ENCODE measurements at regions of chr4 and their contacts with region 1.

Region 1: GRCh38 chr4:40149960-40150385 is 46.9 kb upstream of the RHOH start:
- DNase-seq: peak; percentile 68 to 84 (median 77)
- H3K4me3 ChIP-seq: no peak overlapping the region
- H3K4me3 Mint-ChIP-seq: no peak overlapping the region
- H3K27ac ChIP-seq: no peak overlapping the region
- H3K27ac Mint-ChIP-seq: peak overlapping the region in 1 of 7 donors; percentile 46
- H3K4me1 ChIP-seq: no peaks in the 10 kb centered on the region
- H3K4me1 Mint-ChIP-seq: no peaks in the 10 kb centered on the region
- H3K27me3 ChIP-seq: no peaks in the 10 kb centered on the region
- H3K27me3 Mint-ChIP-seq: no peaks in the 10 kb centered on the region
- CTCF ChIP-seq: peak; percentile 94

Region 2: DNA sequence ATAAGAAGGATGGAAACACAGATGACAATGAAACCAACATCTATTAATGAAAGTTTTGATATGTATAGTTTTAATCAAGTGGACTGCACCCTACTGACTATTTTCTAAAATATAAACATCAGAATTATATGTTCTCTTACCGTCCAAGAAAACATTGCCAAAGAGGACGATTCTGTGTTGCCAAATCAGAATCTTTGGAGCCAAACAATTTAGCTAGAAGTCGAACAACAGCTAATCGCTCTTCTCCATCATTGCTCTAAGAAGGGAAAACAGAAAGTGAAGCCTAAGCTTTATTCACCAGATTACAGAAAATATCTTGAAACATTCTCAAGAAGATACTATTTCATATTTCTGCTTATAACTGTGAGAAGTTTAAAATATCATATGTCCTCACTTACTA is 236.5 kb before region 1 on chr4:
- intact Hi-C with region 1: no loop called
- DNase-seq: no peak
- H3K4me3 ChIP-seq: no peak overlapping the region
- H3K4me3 Mint-ChIP-seq: no peak overlapping the region
- H3K27ac ChIP-seq: no peak overlapping the region
- H3K27ac Mint-ChIP-seq: no peak overlapping the region
- H3K4me1 ChIP-seq: no peaks in the 10 kb centered on the region
- H3K4me1 Mint-ChIP-seq: no peaks in the 10 kb centered on the region
- H3K27me3 ChIP-seq: no peaks in the 10 kb centered on the region
- H3K27me3 Mint-ChIP-seq: no peaks in the 10 kb centered on the region
- CTCF ChIP-seq: no peak

Region 3: DNA sequence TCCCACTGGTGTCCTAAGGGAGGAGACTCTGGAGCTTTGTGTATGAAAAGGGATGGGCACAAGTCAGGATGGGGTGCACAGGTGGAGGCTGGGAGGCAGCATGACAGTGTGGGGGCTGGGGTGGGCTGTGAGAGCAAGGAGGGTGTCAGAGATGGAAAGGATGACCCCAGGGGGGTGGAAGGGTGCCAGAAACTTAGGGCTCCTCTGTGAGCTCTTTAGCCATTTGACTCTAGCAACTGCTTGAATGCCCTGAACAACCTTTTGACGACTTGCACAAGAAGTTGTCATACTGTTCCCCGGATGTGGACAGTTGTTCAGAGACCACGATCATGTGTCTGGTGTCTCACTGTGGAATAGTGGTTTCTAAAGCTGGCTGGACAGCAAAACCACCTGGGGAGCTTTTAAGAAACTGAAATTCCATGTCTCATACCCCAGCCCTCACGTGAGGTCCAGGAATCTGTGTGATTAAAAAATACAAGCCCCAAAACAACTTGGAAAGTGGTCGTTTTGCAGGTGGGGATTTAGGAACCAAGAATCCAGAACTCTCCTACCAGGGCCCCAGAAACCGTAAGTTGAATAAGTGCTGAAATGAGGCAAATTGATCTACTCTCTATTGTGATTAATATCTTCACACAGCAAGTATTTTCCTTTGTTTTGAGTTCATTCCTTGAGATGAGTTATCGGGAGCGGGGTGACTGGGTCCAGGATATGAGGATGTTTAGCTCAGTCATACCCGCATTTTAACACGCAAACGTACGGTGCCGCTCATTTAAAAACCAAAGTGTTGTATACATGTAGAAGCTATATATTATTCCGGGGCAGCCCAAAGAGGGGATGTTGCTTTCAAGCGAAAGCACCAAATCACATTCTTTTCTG is 50.3 kb after region 1 on chr4:
- intact Hi-C with region 1: loop called in 1 of 2 experiments (anchors 10 kb)
- DNase-seq: peak; percentile 76 to 93 (median 82)
- H3K4me3 ChIP-seq: peak overlapping the region; percentile 25 to 71 (median 69)
- H3K4me3 Mint-ChIP-seq: peak overlapping the region; percentile 70 to 90
- H3K27ac ChIP-seq: peak overlapping the region; percentile 6 to 76
- H3K27ac Mint-ChIP-seq: peak overlapping the region; percentile 67 to 90 (median 84)
- H3K4me1 ChIP-seq: peaks cover 63 to 69% of the 10 kb centered on the region in 2 donors
- H3K4me1 Mint-ChIP-seq: peaks cover 70% of the 10 kb centered on the region
- H3K27me3 ChIP-seq: no peaks in the 10 kb centered on the region
- H3K27me3 Mint-ChIP-seq: peaks cover 0 to 4% (median 0%) of the 10 kb centered on the region in 3 donors
- CTCF ChIP-seq: no peak

Region 4: DNA sequence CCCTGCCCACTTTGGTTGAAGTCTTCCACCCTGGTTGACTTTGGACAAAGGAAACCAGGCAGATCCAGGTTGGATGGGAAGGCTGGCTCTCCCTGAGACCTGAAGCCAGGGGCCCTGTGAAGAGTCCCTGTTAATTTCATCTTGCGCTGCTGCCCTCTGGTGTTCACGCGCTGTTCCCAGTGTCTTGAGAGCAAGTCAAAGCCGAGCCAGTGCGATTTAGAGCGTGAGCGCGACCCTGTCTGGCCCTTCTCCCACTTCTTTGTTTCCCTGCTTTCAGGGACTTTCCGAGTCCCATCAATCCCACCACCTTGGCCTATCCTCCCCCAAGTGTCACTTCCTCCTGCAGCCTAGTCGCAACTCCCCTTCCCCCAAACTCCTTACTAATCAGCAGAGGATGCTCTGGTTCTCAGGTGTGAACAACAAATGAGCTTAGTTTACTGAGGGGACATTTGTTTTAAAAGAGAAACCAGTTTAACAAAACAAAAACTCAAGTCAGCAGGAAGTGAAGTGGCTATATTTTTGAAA is 159.3 kb after region 1 on chr4:
- intact Hi-C with region 1: loop called in 1 of 2 experiments (anchors 5 kb)
- DNase-seq: peak; percentile 74 to 85 (median 80)
- H3K4me3 ChIP-seq: no peak overlapping the region
- H3K4me3 Mint-ChIP-seq: peak overlapping the region; percentile 60 to 83
- H3K27ac ChIP-seq: peak overlapping the region in 1 of 2 donors; percentile 89
- H3K27ac Mint-ChIP-seq: peak overlapping the region; percentile 87 to 98 (median 97)
- H3K4me1 ChIP-seq: peaks cover 54 to 59% of the 10 kb centered on the region in 2 donors
- H3K4me1 Mint-ChIP-seq: peaks cover 64% of the 10 kb centered on the region
- H3K27me3 ChIP-seq: no peaks in the 10 kb centered on the region
- H3K27me3 Mint-ChIP-seq: peaks cover 7 to 16% (median 8%) of the 10 kb centered on the region in 3 donors
- CTCF ChIP-seq: peak; percentile 87

Region 5: DNA sequence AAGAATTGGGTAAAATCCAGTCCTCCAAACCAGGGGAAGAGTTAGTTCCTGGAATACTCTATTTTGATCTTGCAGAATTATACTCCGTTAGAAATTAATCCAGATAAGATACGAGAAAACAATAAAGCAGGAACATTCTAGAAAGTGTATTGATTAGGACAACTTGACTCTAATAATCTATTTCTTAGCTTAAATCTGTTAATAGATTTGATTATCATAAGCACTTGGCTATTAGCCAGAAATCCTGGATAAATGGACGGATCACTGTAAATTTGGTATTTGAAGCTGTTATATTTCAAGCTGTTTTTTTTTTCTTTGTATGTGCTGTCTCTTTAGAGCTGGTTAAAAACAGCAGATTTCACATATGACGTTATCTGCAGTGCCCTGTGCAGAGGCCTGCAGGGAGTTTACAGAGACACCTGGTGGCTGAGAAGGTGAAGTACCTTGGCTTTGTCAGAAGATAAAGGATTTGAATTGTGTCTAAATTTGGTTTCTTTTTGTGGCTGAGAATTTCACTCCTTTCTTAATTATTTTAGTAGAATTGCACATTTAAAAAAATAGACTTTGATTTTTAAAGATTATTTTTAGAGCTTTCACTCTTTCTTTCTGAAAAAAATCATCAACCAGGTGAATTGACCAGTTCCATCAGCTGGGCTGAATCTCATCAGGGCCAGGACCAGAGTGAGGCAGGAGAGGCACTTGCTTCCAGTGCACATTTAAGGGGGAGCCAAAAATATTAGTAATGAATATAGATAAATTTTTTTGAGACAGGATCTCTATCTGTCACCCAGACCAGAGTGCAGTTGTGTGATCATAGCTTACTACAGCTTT is 175.4 kb after region 1 on chr4:
- intact Hi-C with region 1: loop called (anchors 5 to 10 kb)
- DNase-seq: peak; percentile 68 to 79 (median 77)
- H3K4me3 ChIP-seq: no peak overlapping the region
- H3K4me3 Mint-ChIP-seq: no peak overlapping the region
- H3K27ac ChIP-seq: no peak overlapping the region
- H3K27ac Mint-ChIP-seq: peak overlapping the region in 3 of 7 donors; percentile 57 to 75 (median 63)
- H3K4me1 ChIP-seq: peaks cover 21 to 28% of the 10 kb centered on the region in 2 donors
- H3K4me1 Mint-ChIP-seq: peaks cover 34% of the 10 kb centered on the region
- H3K27me3 ChIP-seq: no peaks in the 10 kb centered on the region
- H3K27me3 Mint-ChIP-seq: peaks cover 0 to 2% (median 2%) of the 10 kb centered on the region in 3 donors
- CTCF ChIP-seq: peak; percentile 86

Region 6: GRCh38 chr4:40409835-40410234 is 259.9 kb after region 1 on chr4:
- intact Hi-C with region 1: loop called in 1 of 2 experiments (anchors 10 kb)
- DNase-seq: no peak
- H3K4me3 ChIP-seq: no peak overlapping the region
- H3K4me3 Mint-ChIP-seq: no peak overlapping the region
- H3K27ac ChIP-seq: no peak overlapping the region
- H3K27ac Mint-ChIP-seq: no peak overlapping the region
- H3K4me1 ChIP-seq: no peaks in the 10 kb centered on the region
- H3K4me1 Mint-ChIP-seq: peaks cover 6% of the 10 kb centered on the region
- H3K27me3 ChIP-seq: no peaks in the 10 kb centered on the region
- H3K27me3 Mint-ChIP-seq: peaks cover 0 to 1% (median 0%) of the 10 kb centered on the region in 3 donors
- CTCF ChIP-seq: no peak